Cardiac septum (tissue), 1 donor: ENCODE measurements at regions of chrX and their contacts with region 1.

Region 1: DNA sequence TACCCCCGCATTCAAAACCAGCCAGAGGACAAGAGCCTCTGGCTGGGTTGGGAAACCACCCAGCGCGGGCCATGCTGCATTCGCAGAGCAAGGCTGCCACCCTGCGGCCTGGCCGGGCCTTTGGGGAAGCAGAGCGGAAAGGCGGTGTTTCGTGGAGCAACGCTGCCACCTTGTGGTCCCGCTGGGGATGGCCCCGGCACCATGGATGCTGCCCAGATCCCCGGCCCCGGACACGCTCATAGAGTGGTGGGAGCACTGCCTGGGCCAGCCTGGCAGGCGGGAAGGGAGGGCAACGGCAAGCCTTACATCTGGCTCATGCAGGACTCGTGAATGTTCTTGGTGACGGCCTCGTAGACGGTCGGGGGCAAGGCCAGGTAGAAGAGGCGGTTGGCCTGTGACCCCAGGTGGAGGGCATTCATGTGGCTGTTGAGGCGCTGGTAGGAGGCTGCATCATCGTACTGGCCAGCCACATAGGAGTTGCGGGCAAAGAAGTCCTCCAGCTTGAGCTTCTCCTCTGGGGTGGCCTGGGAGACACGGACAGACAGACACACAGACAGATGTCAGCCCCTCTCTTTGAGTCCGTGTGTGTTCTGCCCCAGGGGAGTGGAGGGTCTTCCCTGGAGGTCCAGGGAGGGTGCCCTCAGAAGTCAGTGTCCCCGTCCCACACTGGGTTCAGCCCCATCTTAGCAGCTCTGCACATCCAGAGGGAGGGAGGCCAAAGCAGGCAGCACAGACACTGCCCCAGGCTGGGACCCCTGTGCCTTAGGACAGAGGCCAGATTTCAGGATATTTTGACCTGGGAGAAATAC is 11.6 kb downstream of the G6PD start:
- DNase-seq: peak; percentile 96

Region 2: GRCh38 chrX:152958524-152959465 is 1576.3 kb before region 1 on chrX:
- intact Hi-C with region 1: loop called (anchors 5 kb)
- DNase-seq: peak; percentile 92

Region 3: GRCh38 chrX:154013614-154014360 is 521.3 kb before region 1 on chrX:
- intact Hi-C with region 1: loop called (anchors 5 kb)
- DNase-seq: no peak

Region 4: DNA sequence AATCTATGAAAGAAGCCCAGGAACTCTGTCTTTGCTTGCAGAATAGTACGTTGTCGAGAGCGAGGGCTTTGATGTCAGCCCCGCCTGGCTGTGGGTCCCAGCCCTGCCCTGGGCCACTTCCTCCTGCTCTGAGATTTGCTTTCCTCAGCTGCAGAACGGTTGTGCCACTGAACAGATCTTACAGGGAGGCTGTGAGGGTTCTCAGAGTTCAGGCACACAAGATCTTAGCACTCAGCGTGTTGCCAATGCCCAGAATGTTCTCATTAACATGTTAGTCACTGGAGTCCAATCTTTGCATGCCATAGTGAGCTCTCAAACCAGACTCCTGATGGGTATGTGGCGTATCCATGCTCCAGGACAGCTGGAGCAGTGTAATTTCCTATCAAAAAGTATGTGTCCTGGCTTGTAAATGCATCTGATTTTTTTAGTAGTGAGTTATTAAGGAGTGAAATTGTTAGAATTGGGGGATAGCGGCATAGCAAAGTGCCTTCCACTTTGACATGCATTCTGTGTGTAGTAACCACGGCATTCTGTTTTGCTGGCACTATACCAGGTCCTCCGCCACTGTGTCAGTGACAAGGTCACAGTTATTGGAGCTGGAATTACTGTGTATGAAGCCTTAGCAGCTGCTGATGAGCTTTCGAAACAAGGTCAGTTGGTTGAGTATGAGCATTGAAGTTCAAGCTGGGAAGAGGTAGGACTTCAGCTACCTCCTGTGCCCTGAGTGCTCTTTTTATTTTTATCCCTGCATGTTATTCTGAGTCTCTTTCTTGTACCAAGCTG is 207.8 kb before region 1 on chrX:
- intact Hi-C with region 1: loop called (anchors 5 kb)
- DNase-seq: no peak

Region 5: GRCh38 chrX:154436983-154437719 is 97.9 kb before region 1 on chrX and contains the start of gene GDI1:
- intact Hi-C with region 1: loop called (anchors 5 kb)
- DNase-seq: no peak
- total RNA-seq, gene GDI1: 114 TPM